H1 (cell line): ENCODE measurements at regions of chr18 and their contacts with region 1.

Region 1: DNA sequence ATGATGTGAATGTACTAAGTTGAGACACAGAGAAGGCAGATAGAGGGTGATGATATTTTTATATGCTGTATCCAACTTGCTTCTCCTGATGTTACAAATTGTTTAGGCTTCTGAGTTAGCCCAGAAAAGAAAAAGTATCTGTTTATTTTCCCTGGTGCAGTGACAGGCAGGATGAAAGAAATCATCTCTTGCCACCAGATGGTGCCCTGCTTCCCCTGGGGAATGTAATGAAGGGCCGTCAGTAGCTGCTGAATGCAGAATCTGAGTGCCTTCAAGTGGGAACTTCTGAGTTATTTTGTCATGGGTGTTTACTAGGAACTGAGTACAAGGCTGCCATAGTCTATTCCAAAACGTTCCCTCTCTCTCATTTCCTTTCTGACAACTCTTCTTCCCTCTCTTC is 525.6 kb downstream of the MBD2 start:
- DNase-seq: peak in 1 of 2 experiments; percentile 48
- H3K4me3 ChIP-seq: no peak overlapping the region
- H3K27ac ChIP-seq: no peak overlapping the region
- H3K4me1 ChIP-seq: no peaks in the 10 kb centered on the region; a peak in 1 of 7 replicates
- H3K27me3 ChIP-seq: no peaks in the 10 kb centered on the region
- CTCF ChIP-seq: peak; percentile 64 to 70 (median 67)
- EP300 ChIP-seq: no peak
- POLR2A ChIP-seq: no peak
- RAD21 ChIP-seq: peak; percentile 83 to 88

Region 2: DNA sequence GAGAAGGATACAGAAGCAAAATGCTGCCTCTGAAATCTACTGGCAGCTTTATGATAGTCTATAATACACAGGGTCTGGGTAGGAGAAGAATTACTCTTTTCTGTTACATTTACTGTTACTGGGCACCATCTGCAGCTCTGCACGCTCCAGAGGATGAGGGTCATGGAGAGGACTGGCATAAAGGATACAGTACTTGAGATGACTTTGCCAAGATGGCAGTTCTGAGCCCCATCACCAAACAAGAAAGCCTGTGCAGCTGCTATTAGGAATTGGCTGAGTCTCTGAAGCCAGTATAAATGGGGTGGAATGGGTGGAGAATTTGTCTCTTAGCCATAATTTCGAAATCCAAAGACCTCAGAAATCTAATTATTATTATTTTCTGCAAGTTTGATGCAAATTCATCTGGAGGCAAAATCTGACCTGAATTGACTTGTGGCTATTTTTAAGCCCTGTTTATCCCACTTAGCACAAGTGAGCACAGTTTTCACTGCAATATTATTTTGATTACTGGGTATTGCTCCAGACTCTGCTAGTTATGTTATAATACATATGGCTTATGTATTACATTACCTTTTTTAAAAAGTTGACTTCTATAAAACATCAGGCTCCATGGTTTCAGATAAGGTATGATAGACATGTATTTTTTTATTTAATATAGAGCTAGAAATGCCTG is 54.0 kb before region 1 on chr18:
- CTCF ChIA-PET with region 1: no interaction called
- POLR2A ChIA-PET with region 1: no interaction called
- DNase-seq: no peak
- H3K4me3 ChIP-seq: no peak overlapping the region
- H3K27ac ChIP-seq: no peak overlapping the region
- H3K4me1 ChIP-seq: no peaks in the 10 kb centered on the region
- H3K27me3 ChIP-seq: no peaks in the 10 kb centered on the region
- CTCF ChIP-seq: no peak
- EP300 ChIP-seq: no peak
- POLR2A ChIP-seq: no peak
- RAD21 ChIP-seq: no peak

Region 3: DNA sequence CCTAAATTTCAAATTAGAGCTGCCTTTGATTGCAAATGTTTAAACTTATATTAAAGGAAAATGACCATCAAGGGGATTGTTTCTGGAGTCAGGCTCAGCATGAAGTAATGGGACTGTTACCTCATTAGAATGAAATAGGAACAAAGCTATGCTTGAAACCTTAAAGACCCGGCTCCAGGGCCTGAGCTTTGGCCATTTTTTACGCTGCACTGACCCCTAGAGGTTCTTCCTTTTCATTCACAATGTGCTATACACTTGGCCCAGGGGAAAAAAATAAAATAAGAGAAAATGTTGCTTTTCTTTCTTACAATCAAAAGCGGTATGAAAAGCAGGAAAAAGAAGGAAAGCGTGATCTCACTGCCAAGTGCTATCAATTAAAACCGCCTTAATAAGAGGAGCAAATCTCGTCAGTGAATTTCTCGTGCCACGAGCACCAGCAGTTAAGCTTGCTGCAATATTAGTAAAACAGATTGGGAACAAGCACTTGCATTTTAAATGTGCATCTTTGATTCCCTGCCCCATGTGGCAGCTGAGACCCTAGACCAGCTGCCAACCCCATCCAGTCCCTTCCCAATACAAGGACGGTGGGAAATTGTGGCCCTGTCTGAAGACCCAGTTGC is 429.0 kb after region 1 on chr18:
- CTCF ChIA-PET with region 1: interaction called, 13 read pairs
- POLR2A ChIA-PET with region 1: no interaction called
- DNase-seq: peak in 1 of 2 experiments; percentile 53
- H3K4me3 ChIP-seq: no peak overlapping the region
- H3K27ac ChIP-seq: no peak overlapping the region
- H3K4me1 ChIP-seq: peaks cover 0 to 11% (median 3%) of the 10 kb centered on the region in 4 experiments; a peak in 4 of 7 replicates
- H3K27me3 ChIP-seq: no peaks in the 10 kb centered on the region
- CTCF ChIP-seq: peak; percentile 16 to 61 (median 61)
- EP300 ChIP-seq: no peak
- POLR2A ChIP-seq: no peak
- RAD21 ChIP-seq: peak; percentile 90 to 92